ENCODE measurements at regions of chr17 and their contacts with region 1.

Region 1: DNA sequence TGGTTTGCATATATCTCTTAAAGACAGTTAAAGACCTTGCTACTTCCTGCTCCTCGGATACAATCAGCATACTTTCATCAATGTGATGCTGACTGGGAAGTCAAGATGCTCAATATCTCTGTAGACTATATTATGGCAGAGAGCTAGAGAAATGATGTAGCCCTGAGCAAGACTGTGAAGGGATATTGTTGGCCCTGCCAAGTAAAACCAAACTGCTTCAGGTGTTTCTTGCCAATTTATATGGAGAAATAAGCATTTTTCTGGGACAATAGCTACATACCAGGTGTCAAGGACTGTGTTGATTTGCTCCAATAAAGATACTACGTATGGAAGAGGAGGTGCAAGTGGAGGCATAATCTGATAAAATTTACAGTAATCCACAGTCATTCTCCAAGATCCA is 4.7 kb upstream of the EFCAB5 start:
- DNase-seq: no peak
- ATAC-seq: no peak
- H3K4me3 ChIP-seq: no peak overlapping the region
- H3K27ac ChIP-seq: no peak overlapping the region
- H3K4me1 ChIP-seq: peaks cover 8% of the 10 kb centered on the region
- H3K27me3 ChIP-seq: no peaks in the 10 kb centered on the region
- CTCF ChIP-seq: no peak

Region 2: DNA sequence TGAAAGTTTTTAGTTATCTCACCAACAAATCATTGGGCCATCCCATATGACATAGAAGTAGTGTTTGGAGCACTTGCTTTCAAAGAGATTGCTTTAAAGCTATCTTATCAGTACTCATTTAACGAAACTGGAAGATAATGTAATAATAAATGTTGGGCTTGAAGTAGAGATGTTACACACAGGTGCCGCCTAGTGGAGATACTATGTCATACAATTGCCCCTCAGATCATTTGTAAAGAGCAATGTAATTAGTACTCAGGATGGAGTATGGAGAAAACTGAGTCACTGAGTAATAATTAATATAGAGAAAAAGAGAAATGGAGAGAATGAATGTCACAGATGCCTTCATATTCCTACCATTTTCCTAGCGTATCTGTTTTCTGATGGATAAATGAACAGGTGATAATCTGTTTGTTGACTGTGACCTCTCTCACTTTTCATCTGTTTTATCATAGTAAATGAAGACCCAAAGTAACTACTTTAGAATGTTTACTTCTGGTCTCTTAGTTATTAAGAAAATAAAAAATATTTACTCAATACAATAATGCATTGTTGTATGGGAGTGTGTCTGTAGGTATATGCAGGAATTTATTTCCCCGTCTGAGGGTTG is 85.1 kb after region 1 on chr17:
- CTCF ChIA-PET with region 1: interaction called, 8 read pairs
- POLR2A ChIA-PET with region 1: no interaction called
- in situ Hi-C with region 1: no loop called
- intact Hi-C with region 1: loop called (anchors 2 kb)
- DNase-seq: peak; percentile 28
- ATAC-seq: peak; percentile 80
- H3K4me3 ChIP-seq: no peak overlapping the region
- H3K27ac ChIP-seq: no peak overlapping the region
- H3K4me1 ChIP-seq: no peaks in the 10 kb centered on the region
- H3K27me3 ChIP-seq: no peaks in the 10 kb centered on the region
- CTCF ChIP-seq: peak; percentile 81; the same call in 1 of the 2 replicates